ENCODE measurements at regions of chr5 and their contacts with region 1.

Region 1: GRCh38 chr5:146007270-146007669 is 70.9 kb downstream of the SH3RF2 start:
- DNase-seq: no peak

Region 2: DNA sequence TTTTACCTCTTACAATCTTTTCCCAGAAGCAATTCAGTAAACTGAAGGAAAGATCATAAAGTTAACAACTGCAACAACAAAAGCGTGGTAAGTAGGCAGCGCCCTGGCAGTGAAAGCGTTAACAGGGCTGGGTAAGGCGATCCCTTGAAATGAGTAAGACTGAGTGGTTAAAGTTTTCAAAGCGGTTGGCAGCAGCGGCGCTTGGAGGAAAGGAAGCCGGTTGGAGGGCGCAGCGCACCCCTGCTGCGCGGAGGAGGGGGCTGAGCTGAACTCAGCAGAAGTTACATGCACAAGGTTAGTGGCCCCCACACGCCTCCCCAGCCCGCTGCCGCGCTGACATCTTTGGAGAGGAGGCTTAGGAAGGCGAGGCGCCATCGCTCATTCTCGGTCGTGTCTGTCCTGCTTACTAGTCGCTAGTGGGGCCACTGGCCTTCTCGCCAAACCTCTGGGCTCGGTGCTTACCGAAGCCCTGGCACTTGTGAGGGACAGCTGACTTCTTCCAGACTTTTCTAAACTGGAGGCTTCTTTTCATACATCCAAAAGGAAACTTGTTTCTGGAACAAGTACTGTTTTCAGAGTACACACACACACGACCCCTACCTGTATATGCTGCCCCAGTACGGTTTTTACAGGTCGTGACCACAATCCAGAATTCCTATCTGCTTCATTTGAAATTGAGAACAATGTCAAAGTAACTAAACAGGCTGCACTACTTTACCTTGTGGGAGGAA is 70.7 kb before region 1 on chr5 and contains the start of gene SH3RF2:
- in situ Hi-C with region 1: loop called (anchors 5 kb)
- DNase-seq: peak; percentile 59
- total RNA-seq, gene SH3RF2: 11.1 and 14.6 TPM in 2 replicates

Region 3: DNA sequence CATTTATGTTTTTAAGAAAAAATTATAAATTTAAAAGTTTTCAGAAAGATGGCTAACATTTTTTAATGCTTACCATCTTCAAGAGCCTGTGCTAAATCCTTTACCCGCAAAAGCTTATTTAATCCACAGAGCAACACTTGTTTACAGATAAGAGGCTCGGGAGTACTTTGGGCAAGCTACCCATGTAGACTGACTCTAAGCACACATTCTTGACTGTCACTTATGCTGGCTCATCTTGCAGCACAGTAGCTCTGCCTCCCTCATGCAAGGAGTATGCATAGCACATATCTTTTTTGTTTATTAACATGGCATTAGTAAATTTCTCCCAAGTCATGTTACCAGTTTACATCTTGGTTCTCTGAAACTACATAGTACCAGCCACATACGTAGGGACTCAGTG is 56.2 kb before region 1 on chr5:
- in situ Hi-C with region 1: no loop called
- DNase-seq: no peak

Region 4: GRCh38 chr5:146306838-146307237 is 299.6 kb after region 1 on chr5:
- in situ Hi-C with region 1: no loop called
- DNase-seq: no peak

Measured in G401 (cell line).